ENCODE measurements at regions of chr3 and their contacts with region 1.

Region 1: DNA sequence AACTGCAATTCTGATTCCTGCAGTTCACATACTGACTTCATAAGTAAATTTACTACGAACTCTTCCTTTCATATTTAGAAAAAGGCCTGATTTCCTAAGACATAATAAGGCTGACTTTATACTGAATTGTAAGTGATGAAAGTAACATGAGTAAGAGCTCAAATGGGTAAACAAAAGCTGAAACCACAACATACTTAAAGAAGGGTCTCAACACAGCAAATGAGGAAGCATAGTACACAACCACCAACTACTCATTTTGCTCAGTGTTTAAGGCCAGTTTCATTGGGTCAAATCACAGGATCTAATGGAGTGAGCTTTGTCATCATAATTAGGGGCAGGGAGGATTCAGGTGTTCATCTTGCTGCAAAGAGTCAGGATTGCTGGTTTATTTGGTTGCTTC is 81.4 kb downstream of the SETD2 start:
- DNase-seq: no peak
- ATAC-seq: no peak
- H3K4me3 ChIP-seq: no peak overlapping the region
- H3K27ac ChIP-seq: no peak overlapping the region
- H3K4me1 ChIP-seq: no peaks in the 10 kb centered on the region
- H3K27me3 ChIP-seq: no peaks in the 10 kb centered on the region
- CTCF ChIP-seq: no peak

Region 2: DNA sequence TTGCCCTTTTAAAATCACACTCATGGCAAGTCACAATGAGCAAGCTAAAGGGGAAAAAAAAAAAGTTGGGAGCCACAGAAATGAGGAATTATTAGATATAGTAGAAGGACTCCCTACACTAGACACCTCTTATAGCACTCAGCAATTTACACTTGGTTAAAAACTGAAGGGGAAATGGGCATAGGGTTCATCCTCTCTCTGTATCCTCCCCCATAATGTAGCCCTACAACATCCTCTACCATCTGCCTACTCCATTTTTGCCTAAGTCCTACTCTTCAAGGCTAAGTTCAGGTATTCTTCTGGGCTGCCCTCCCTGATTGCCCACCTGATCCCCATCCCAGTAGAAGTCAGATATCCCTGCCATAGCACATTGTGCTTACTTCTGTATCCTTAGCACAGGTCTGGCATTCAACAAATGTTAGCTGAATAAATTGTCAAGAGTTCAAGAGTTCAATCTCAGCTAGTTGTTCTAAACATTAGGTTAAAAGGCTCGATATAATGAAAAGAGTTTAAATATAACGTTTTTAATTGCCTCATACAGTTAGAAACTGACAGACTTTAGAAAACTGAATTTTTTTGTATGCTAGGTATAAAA is 66.9 kb after region 1 on chr3:
- CTCF ChIA-PET with region 1: no interaction called
- POLR2A ChIA-PET with region 1: no interaction called
- in situ Hi-C with region 1: no loop called
- intact Hi-C with region 1: no loop called
- DNase-seq: no peak
- ATAC-seq: no peak
- H3K4me3 ChIP-seq: no peak overlapping the region
- H3K27ac ChIP-seq: no peak overlapping the region
- H3K4me1 ChIP-seq: no peaks in the 10 kb centered on the region; the same call in 1 of the 2 replicates
- H3K27me3 ChIP-seq: no peaks in the 10 kb centered on the region
- CTCF ChIP-seq: no peak

Region 3: GRCh38 chr3:47221798-47222197 is 139.3 kb after region 1 on chr3:
- CTCF ChIA-PET with region 1: no interaction called
- POLR2A ChIA-PET with region 1: interaction called, 14 read pairs
- in situ Hi-C with region 1: no loop called
- intact Hi-C with region 1: no loop called
- DNase-seq: no peak
- ATAC-seq: no peak
- H3K4me3 ChIP-seq: no peak overlapping the region
- H3K27ac ChIP-seq: no peak overlapping the region
- H3K4me1 ChIP-seq: no peaks in the 10 kb centered on the region
- H3K27me3 ChIP-seq: no peaks in the 10 kb centered on the region
- CTCF ChIP-seq: no peak

Region 4: GRCh38 chr3:47365213-47366153 is 283.0 kb after region 1 on chr3:
- CTCF ChIA-PET with region 1: no interaction called
- POLR2A ChIA-PET with region 1: no interaction called
- in situ Hi-C with region 1: no loop called
- intact Hi-C with region 1: no loop called
- DNase-seq: no peak
- ATAC-seq: no peak
- H3K4me3 ChIP-seq: no peak overlapping the region
- H3K27ac ChIP-seq: no peak overlapping the region
- H3K4me1 ChIP-seq: no peaks in the 10 kb centered on the region
- H3K27me3 ChIP-seq: no peaks in the 10 kb centered on the region
- CTCF ChIP-seq: no peak

Region 5: GRCh38 chr3:47565734-47566550 is 483.4 kb after region 1 on chr3:
- CTCF ChIA-PET with region 1: no interaction called
- POLR2A ChIA-PET with region 1: no interaction called
- in situ Hi-C with region 1: no loop called
- intact Hi-C with region 1: no loop called
- DNase-seq: no peak
- ATAC-seq: no peak
- H3K4me3 ChIP-seq: no peak overlapping the region
- H3K27ac ChIP-seq: no peak overlapping the region
- H3K4me1 ChIP-seq: no peaks in the 10 kb centered on the region
- H3K27me3 ChIP-seq: no peaks in the 10 kb centered on the region
- CTCF ChIP-seq: no peak

Region 6: DNA sequence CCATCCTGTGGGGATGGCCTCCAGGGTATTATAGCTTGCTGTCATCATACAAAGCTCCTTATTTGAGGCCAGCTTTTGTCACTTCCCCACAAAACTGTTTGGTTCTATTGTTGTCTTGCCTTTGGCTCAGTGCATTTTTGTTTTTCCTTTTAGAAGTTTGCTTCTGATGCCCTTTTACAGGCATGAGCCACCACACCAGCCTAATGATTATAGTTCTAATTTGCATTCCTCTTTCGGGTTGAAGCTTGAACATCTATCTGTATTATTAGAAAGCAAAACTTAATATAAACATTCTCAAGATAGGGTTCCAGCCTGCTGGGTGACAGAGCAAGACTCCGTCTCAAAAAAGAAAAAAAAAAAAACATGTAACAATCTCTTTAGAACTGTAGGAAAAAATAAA is 659.4 kb after region 1 on chr3:
- CTCF ChIA-PET with region 1: no interaction called
- POLR2A ChIA-PET with region 1: no interaction called
- in situ Hi-C with region 1: no loop called
- intact Hi-C with region 1: no loop called
- DNase-seq: no peak
- ATAC-seq: no peak
- H3K4me3 ChIP-seq: no peak overlapping the region
- H3K27ac ChIP-seq: no peak overlapping the region
- H3K4me1 ChIP-seq: no peaks in the 10 kb centered on the region
- H3K27me3 ChIP-seq: no peaks in the 10 kb centered on the region
- CTCF ChIP-seq: no peak

Measured in Panc1 (cell line).